Mammary epithelial cell (primary cell): ENCODE measurements at regions of chr5 and their contacts with region 1.

Region 1: GRCh38 chr5:143685246-143685802 is 126.6 kb upstream of the HMHB1 start:
- DNase-seq: no peak
- H3K4me3 ChIP-seq: no peak overlapping the region
- H3K27ac ChIP-seq: no peak overlapping the region
- H3K4me1 ChIP-seq: no peaks in the 10 kb centered on the region
- H3K27me3 ChIP-seq: no peaks in the 10 kb centered on the region
- CTCF ChIP-seq: peak; percentile 27 to 63

Region 2: DNA sequence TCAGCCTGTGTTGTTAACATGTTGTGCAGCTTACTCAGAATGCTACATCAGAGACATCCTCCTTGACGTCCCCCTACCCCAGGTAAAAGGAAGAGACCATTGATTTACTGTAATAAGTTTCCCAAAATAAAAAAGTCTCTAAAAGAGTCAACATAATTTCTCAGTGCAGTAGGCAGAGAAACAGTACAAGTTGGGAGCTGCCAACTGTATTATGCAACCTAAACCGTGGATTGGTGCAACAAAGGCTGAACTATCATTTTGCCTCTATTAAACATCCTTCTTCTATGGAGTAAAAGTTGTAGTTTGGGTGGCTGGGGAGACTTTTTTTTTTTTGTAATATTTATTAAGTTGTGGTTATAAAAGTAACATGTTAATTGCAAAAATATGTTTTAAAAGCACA is 489.8 kb before region 1 on chr5:
- CTCF ChIA-PET with region 1: no interaction called
- dilution Hi-C with region 1: no loop called
- in situ Hi-C with region 1: no loop called
- intact Hi-C with region 1: loop called (anchors 5 kb)
- DNase-seq: peak; percentile 66
- H3K4me3 ChIP-seq: no peak overlapping the region
- H3K27ac ChIP-seq: peak overlapping the region; percentile 45
- H3K4me1 ChIP-seq: peaks cover 52% of the 10 kb centered on the region
- H3K27me3 ChIP-seq: no peaks in the 10 kb centered on the region
- CTCF ChIP-seq: no peak

Region 3: GRCh38 chr5:143506881-143507551 is 178.3 kb before region 1 on chr5:
- CTCF ChIA-PET with region 1: no interaction called
- dilution Hi-C with region 1: no loop called
- in situ Hi-C with region 1: no loop called
- intact Hi-C with region 1: loop called (anchors 10 kb)
- DNase-seq: peak; percentile 90
- H3K4me3 ChIP-seq: no peak overlapping the region
- H3K27ac ChIP-seq: peak overlapping the region; percentile 15
- H3K4me1 ChIP-seq: peaks cover 18% of the 10 kb centered on the region
- H3K27me3 ChIP-seq: no peaks in the 10 kb centered on the region
- CTCF ChIP-seq: peak in 1 of 2 donors; percentile 49